BJ (cell line): ENCODE measurements at regions of chr9 and their contacts with region 1.

Region 1: DNA sequence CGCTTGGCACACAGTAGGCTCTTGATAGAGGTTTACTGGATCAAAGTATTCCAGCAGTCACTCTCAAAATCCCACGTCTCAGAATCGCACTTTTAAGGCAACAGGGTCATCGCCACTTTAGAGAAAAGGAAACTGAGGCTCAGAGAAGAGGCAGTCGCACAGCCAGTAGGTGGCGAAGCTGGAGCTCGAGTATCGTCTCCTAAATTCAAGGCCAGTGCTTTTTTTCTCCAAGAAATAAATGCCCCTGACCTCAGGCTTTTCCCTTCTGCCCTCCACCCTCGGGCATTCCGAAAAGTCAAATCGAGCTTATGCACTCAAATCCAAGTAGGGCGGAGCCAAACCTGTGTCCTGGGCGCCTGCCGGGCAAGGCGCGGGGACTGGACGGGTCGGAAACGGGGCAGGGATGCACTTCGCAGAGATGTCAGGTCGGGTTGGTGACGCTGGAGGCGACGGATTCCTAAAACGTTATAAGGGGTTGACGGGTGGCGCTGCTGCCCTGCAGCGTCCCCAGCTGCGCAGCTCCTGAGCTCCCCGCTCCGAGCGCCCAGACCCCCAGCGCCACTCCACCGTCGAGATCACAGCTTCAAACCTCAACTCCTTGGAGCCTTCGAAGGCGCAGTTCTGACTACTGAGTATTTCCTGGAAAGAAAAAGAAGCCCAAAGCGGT is 4.7 kb upstream of the FOXB2 start:
- DNase-seq: no peak
- H3K4me3 ChIP-seq: no peak overlapping the region
- H3K27me3 ChIP-seq: peaks cover 76% of the 10 kb centered on the region
- CTCF ChIP-seq: peak; percentile 40

Region 2: GRCh38 chr9:76996700-76997099 is 18.0 kb before region 1 on chr9:
- CTCF ChIA-PET with region 1: interaction called, 11 read pairs
- POLR2A ChIA-PET with region 1: no interaction called
- DNase-seq: no peak
- H3K4me3 ChIP-seq: no peak overlapping the region
- H3K27me3 ChIP-seq: no peaks in the 10 kb centered on the region
- CTCF ChIP-seq: peak; percentile 78

Region 3: GRCh38 chr9:77156646-77157371 is 142.1 kb after region 1 on chr9:
- CTCF ChIA-PET with region 1: interaction called, 11 read pairs
- POLR2A ChIA-PET with region 1: no interaction called
- DNase-seq: no peak
- H3K4me3 ChIP-seq: no peak overlapping the region
- H3K27me3 ChIP-seq: peaks cover 2% of the 10 kb centered on the region
- CTCF ChIP-seq: no peak